PC-3 (cell line): ENCODE measurements at regions of chr12 and their contacts with region 1.

Region 1: DNA sequence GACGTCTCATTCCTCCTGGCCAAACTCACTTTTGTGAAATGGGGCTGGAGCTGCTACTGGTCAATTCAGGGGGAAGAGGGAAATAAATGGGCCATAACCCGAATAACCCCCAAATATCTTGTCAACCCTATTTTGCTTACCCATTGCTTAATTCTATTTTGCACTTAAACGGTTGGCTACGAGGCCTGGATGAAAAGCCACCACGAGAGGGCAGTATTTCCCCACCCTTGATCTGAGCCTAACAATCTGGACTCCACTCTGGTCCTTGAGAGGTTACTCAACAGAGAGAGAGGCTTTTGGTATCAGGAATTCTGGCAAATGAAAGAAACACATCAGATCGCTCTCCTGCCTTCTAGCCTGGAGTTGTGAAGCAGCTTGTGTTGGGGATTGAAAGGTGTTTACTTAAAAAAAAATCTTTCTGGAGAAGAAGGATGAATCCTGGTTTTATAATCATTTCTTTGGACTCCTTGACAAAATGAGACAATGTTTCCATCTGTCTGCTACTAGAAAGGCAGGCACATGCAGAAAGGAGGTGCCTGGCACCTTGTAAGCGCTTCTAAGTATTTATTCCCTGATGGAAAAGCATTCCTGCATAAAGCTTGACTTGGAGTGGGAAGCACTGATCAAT is 22.4 kb upstream of the FBXO21 start:
- DNase-seq: peak; percentile 91
- ATAC-seq: peak; percentile 92
- H3K4me3 ChIP-seq: no peak overlapping the region
- H3K27ac ChIP-seq: no peak overlapping the region
- H3K4me1 ChIP-seq: peaks cover 8% of the 10 kb centered on the region
- H3K27me3 ChIP-seq: peaks cover 25% of the 10 kb centered on the region
- CTCF ChIP-seq: peak; percentile 99

Region 2: DNA sequence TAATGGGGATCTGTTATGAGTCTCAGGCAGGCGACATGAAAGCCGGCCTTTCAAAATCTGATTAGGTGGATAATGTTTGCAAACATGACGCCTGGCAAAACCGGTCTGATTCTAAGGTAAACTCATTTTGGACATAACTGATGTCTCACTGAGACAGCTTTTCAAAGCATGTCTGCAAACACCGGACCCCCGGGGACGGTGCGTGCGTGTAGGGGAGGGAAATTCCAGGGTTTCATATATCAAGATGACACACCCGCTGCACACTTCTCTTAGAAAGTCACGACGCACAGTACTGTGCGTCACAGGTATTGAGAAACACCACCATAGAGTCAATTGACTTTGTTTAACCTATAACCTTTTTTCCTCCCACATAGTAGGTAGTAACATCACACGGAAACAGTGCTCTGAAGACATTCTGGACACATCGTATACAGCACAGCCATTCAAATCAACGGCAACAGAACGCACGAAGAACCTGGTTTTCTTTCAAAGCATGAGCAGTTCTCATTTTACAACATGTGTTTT is 69.6 kb before region 1 on chr12:
- CTCF ChIA-PET with region 1: no interaction called
- POLR2A ChIA-PET with region 1: no interaction called
- intact Hi-C with region 1: no loop called
- DNase-seq: peak; percentile 99
- ATAC-seq: peak; percentile 88
- H3K4me3 ChIP-seq: peak overlapping the region; percentile 45
- H3K27ac ChIP-seq: peak overlapping the region; percentile 92
- H3K4me1 ChIP-seq: peaks cover 32% of the 10 kb centered on the region
- H3K27me3 ChIP-seq: no peaks in the 10 kb centered on the region
- CTCF ChIP-seq: no peak

Region 3: GRCh38 chr12:117236456-117237001 is 23.9 kb after region 1 on chr12:
- CTCF ChIA-PET with region 1: no interaction called
- POLR2A ChIA-PET with region 1: no interaction called
- intact Hi-C with region 1: loop called (anchors 2 kb)
- DNase-seq: peak; percentile 89
- ATAC-seq: peak; percentile 97
- H3K4me3 ChIP-seq: no peak overlapping the region
- H3K27ac ChIP-seq: no peak overlapping the region
- H3K4me1 ChIP-seq: no peaks in the 10 kb centered on the region
- H3K27me3 ChIP-seq: peaks cover 15% of the 10 kb centered on the region; the same call in 1 of the 2 replicates
- CTCF ChIP-seq: peak; percentile 97

Region 4: GRCh38 chr12:117671734-117672133 is 459.1 kb after region 1 on chr12:
- CTCF ChIA-PET with region 1: no interaction called
- POLR2A ChIA-PET with region 1: no interaction called
- intact Hi-C with region 1: loop called (anchors 2 kb)
- DNase-seq: peak; percentile 83
- ATAC-seq: peak; percentile 65
- H3K4me3 ChIP-seq: no peak overlapping the region
- H3K27ac ChIP-seq: no peak overlapping the region
- H3K4me1 ChIP-seq: peaks cover 15% of the 10 kb centered on the region; the same call in 1 of the 2 replicates
- H3K27me3 ChIP-seq: no peaks in the 10 kb centered on the region
- CTCF ChIP-seq: peak; percentile 94